ENCODE measurements at regions of chr16 and their contacts with region 1.

Region 1: GRCh38 chr16:23959072-23959751 is 123.4 kb downstream of the PRKCB start:
- DNase-seq: no peak
- H3K4me3 Mint-ChIP-seq: peak overlapping the region; percentile 54
- H3K27ac Mint-ChIP-seq: peak overlapping the region; percentile 82
- H3K4me1 Mint-ChIP-seq: peaks cover 66% of the 10 kb centered on the region
- H3K27me3 Mint-ChIP-seq: no peaks in the 10 kb centered on the region

Region 2: GRCh38 chr16:23863511-23864422 is 95.4 kb before region 1 on chr16:
- intact Hi-C with region 1: loop called (anchors 5 kb)
- DNase-seq: peak; percentile 30
- H3K4me3 Mint-ChIP-seq: peak overlapping the region; percentile 84
- H3K27ac Mint-ChIP-seq: peak overlapping the region; percentile 91
- H3K4me1 Mint-ChIP-seq: peaks cover 82% of the 10 kb centered on the region
- H3K27me3 Mint-ChIP-seq: no peaks in the 10 kb centered on the region

Region 3: GRCh38 chr16:23877107-23878090 is 81.8 kb before region 1 on chr16:
- intact Hi-C with region 1: loop called (anchors 1 kb)
- DNase-seq: no peak
- H3K4me3 Mint-ChIP-seq: no peak overlapping the region
- H3K27ac Mint-ChIP-seq: no peak overlapping the region
- H3K4me1 Mint-ChIP-seq: peaks cover 79% of the 10 kb centered on the region
- H3K27me3 Mint-ChIP-seq: no peaks in the 10 kb centered on the region

Region 4: GRCh38 chr16:23924128-23924527 is 35.1 kb before region 1 on chr16:
- intact Hi-C with region 1: loop called (anchors 5 kb)
- DNase-seq: no peak
- H3K4me3 Mint-ChIP-seq: no peak overlapping the region
- H3K27ac Mint-ChIP-seq: no peak overlapping the region
- H3K4me1 Mint-ChIP-seq: peaks cover 37% of the 10 kb centered on the region
- H3K27me3 Mint-ChIP-seq: no peaks in the 10 kb centered on the region

Region 5: DNA sequence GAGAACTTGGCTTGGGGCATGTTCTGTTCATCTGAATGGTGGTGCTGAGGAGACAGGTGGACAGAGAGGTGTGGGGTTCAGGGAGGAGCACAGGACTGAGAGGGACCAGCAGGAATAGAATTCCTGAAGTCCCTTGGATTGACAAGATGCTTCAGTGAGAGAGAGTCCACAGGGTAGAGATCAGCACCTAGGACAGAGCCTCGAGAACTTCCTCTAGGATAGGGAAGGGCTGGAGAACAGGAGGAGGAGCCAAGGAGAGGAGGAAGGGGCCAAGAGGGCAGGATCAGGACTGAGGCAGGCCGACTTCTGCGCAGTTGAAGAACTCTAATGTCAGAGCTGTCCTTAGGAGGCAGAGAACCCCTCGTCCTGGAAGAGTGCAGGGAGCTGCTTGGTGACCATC is 15.0 kb after region 1 on chr16:
- intact Hi-C with region 1: loop called (anchors 1 kb)
- DNase-seq: no peak
- H3K4me3 Mint-ChIP-seq: no peak overlapping the region
- H3K27ac Mint-ChIP-seq: peak overlapping the region; percentile 29
- H3K4me1 Mint-ChIP-seq: peaks cover 52% of the 10 kb centered on the region
- H3K27me3 Mint-ChIP-seq: no peaks in the 10 kb centered on the region

Region 6: DNA sequence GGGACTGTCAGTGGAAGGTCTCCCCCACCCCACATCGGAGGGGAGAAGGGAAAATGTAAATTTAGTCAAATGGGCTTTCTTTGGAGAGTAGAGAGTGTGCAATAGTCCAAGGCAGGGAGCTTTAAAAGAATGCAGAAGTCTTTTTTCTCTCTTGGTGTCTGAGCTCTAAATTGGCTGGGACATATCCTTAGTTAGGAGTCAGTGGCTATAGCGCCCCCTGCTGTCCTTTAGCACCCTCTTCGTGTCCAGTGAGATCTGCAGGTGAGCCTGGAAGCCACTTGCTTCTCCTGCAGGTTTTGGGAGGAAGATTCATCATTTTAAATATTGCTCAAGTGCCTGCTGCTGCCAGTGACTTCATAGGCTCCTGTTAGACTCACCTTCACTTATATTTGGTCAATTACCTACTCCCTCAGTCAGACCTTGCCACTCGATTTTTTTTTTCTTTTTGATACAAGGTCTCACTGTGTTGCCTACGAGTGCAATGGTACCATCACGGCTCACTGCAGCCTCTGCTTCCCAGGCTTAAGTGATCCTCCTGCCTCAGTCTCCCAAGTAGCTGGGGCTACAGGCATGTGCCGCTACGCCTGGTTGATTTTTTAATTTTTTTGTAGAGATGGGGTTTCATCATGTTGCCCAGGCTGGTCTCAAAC is 51.4 kb after region 1 on chr16:
- intact Hi-C with region 1: loop called (anchors 2 kb)
- DNase-seq: peak; percentile 63
- H3K4me3 Mint-ChIP-seq: no peak overlapping the region
- H3K27ac Mint-ChIP-seq: no peak overlapping the region
- H3K4me1 Mint-ChIP-seq: peaks cover 41% of the 10 kb centered on the region
- H3K27me3 Mint-ChIP-seq: no peaks in the 10 kb centered on the region

Measured in activated T-helper 1 cell treated with anti-CD3 and anti-CD28 coated beads, Interleukin-12 subunit alpha, Interleukin-12 subunit beta, Interleukin-2, Interleukin-4 antibody, amounts not matched to agents 30 ng/mL and 10 ng/mL and 1 ng/mL, durations not matched to agents 14 hours and 24 hours and 36 hours (primary cell).